CD4-positive, alpha-beta T cell (primary cell): ENCODE measurements at regions of chr6 and their contacts with region 1.

Region 1: GRCh38 chr6:130896249-130896648 is 69.0 kb downstream of the SMLR1 start:
- DNase-seq: no peak
- ATAC-seq: no peak
- H3K4me3 ChIP-seq: no peak overlapping the region
- H3K4me3 Mint-ChIP-seq: no peak overlapping the region
- H3K27ac ChIP-seq: no peak overlapping the region
- H3K27ac Mint-ChIP-seq: no peak overlapping the region
- H3K4me1 ChIP-seq: no peaks in the 10 kb centered on the region
- H3K4me1 Mint-ChIP-seq: no peaks in the 10 kb centered on the region
- H3K27me3 ChIP-seq: no peaks in the 10 kb centered on the region
- H3K27me3 Mint-ChIP-seq: no peaks in the 10 kb centered on the region
- CTCF ChIP-seq: no peak

Region 2: GRCh38 chr6:130929036-130929678 is 32.9 kb after region 1 on chr6:
- CTCF ChIA-PET with region 1: no interaction called
- POLR2A ChIA-PET with region 1: no interaction called
- intact Hi-C with region 1: no loop called
- DNase-seq: no peak
- ATAC-seq: no peak
- H3K4me3 ChIP-seq: no peak overlapping the region
- H3K4me3 Mint-ChIP-seq: no peak overlapping the region
- H3K27ac ChIP-seq: no peak overlapping the region
- H3K27ac Mint-ChIP-seq: no peak overlapping the region
- H3K4me1 ChIP-seq: no peaks in the 10 kb centered on the region
- H3K4me1 Mint-ChIP-seq: no peaks in the 10 kb centered on the region
- H3K27me3 ChIP-seq: no peaks in the 10 kb centered on the region
- H3K27me3 Mint-ChIP-seq: no peaks in the 10 kb centered on the region
- CTCF ChIP-seq: no peak

Region 3: DNA sequence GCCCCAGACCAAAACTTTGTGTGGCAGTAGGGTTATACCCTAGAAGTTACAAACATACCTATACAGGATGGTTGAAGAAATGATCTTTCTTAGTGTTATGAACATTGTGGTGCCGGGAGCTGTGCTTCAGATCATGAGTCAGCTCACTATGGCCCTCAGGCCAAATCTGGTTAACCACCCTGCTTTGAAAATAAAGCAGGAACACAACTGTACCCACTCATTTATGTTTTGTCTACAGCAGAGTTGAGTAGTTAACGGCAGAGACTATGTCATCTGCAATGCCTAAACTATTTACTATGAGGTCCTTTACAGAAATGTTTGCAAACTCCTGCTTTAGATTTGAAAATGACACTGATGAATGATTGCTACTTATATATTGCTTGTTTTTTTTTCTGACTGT is 263.4 kb after region 1 on chr6:
- CTCF ChIA-PET with region 1: no interaction called
- POLR2A ChIA-PET with region 1: no interaction called
- intact Hi-C with region 1: loop called in 1 of 2 experiments (anchors 5 kb)
- DNase-seq: no peak
- ATAC-seq: no peak
- H3K4me3 ChIP-seq: no peak overlapping the region
- H3K4me3 Mint-ChIP-seq: no peak overlapping the region
- H3K27ac ChIP-seq: no peak overlapping the region
- H3K27ac Mint-ChIP-seq: no peak overlapping the region
- H3K4me1 ChIP-seq: no peaks in the 10 kb centered on the region
- H3K4me1 Mint-ChIP-seq: no peaks in the 10 kb centered on the region
- H3K27me3 ChIP-seq: no peaks in the 10 kb centered on the region
- H3K27me3 Mint-ChIP-seq: no peaks in the 10 kb centered on the region
- CTCF ChIP-seq: no peak